Activated CD4-positive, alpha-beta T cell treated with anti-CD3 and anti-CD28 coated beads, Interleukin-2, amount 10 ng/mL, durations not matched to agents 24 days and 14 days (primary cell): ENCODE measurements at regions of chr2 and their contacts with region 1.

Region 1: DNA sequence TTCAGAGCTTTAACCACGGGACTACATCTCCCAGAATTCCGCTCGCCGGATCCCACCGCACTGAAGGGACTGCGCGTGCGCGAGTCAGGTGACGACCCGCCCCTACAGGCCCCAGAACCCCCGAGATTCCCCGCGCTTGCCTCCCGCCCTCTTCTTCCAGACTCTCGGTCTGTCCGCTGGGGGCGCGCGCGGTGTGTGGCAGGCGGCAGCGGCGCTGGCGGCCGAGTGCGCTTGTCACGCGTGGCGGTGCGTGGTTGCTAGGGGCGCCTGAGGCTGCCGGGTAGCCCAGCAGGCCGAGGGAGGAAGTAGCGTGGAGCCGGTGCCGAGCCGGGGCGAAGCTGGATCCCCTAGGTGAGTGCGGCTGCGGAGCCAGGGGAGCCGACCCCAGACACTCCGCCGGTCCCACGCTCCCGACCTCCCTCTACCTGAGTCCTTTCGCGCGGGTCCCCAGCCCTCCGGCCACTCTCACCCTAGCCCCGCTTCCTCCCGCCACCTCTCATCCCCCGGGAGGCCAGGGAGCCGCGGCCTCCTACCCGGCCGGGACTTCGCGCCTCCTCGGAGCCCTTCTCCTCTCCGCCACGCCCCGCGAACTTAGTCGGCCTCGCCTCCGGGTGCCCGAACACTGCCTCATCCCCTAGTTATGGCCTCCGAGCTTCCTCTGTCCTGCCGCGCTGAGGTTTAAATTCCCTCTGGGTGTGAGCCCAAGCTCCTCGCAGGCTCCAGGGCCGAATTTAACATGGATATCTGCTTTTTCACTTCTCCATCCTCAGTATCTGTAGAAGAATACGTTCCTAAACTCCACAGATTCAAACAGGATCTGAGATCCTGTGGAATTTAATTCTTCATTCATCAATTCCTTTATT is at the start of gene TTLL4:
- DNase-seq: peak; percentile 100
- H3K4me3 Mint-ChIP-seq: peak within 1 kb of the TSS; percentile 94
- H3K27ac Mint-ChIP-seq: peak within 1 kb of the TSS; percentile 85
- H3K4me1 Mint-ChIP-seq: peaks cover 18% of the 10 kb centered on the region
- H3K27me3 Mint-ChIP-seq: peaks cover 3% of the 10 kb centered on the region
- total RNA-seq, gene TTLL4: 66.1 and 71.2 TPM in 2 replicates

Region 2: GRCh38 chr2:218659258-218659987 is 51.5 kb before region 1 on chr2 and contains the starts of genes BCS1L and ZNF142:
- intact Hi-C with region 1: loop called (anchors 1 kb)
- DNase-seq: peak; percentile 98
- H3K4me3 Mint-ChIP-seq: peak within 1 kb of the TSS; percentile 98
- H3K27ac Mint-ChIP-seq: peak within 1 kb of the TSS; percentile 95
- H3K4me1 Mint-ChIP-seq: peaks cover 31% of the 10 kb centered on the region
- H3K27me3 Mint-ChIP-seq: no peaks in the 10 kb centered on the region
- total RNA-seq, gene BCS1L: 92.9 and 94.4 TPM in 2 replicates
- total RNA-seq, gene ZNF142: 59.6 and 60.9 TPM in 2 replicates

Region 3: DNA sequence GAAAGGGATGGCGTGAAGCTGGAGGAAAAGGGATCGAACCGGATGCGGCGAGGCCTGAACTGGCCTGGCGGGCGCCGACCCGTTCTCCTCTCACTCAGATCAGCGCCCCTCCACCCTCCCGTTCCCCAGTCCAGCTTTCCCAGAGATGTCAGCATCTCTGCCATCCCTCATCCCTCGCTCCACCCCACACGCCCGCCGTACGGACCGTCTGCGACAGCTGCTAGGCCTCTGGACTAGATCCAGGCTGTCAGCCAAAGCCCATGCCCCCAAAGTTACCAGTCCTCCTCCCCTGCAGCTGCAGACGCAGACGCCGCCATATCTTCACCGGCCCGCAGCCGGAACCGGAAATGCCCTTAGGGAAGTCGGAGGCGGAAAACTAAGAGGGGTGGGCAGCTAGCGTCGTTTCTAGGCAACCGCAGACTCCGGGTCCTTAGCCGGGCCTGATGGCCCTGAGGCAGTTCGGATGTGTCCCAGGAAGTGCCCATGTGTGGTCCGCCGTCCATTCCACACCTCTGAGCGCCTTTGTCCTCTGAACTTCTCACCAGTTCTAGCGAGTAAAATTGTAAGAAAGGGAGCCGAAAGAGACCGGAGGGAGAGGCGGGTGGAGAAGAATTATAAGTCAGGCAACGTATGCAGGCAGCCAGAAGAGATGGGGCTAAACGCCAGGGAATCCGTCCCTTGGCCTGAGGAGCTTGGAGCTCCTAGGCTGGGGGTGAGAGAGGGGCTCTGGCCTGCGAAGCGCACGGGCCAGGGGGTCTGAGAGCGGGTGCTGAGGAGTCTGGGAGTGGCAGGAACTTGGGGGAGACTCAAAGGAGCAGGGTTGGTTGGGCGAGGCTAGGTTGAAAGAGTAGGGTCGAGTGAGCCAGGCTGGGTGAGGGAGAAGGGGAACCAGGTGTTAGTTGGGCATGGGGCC is 39.0 kb before region 1 on chr2 and contains the starts of genes RNF25 and STK36:
- intact Hi-C with region 1: loop called (anchors 1 kb)
- DNase-seq: peak; percentile 95
- H3K4me3 Mint-ChIP-seq: peak within 1 kb of the TSS; percentile 97
- H3K27ac Mint-ChIP-seq: peak within 1 kb of the TSS; percentile 94
- H3K4me1 Mint-ChIP-seq: peaks cover 22% of the 10 kb centered on the region
- H3K27me3 Mint-ChIP-seq: no peaks in the 10 kb centered on the region
- total RNA-seq, gene RNF25: 23.6 and 28.8 TPM in 2 replicates
- total RNA-seq, gene STK36: 20.2 and 21.3 TPM in 2 replicates

Region 4: GRCh38 chr2:218852911-218853667 is 142.2 kb after region 1 on chr2:
- intact Hi-C with region 1: loop called (anchors 5 kb)
- DNase-seq: peak; percentile 86
- H3K4me3 Mint-ChIP-seq: no peak overlapping the region
- H3K27ac Mint-ChIP-seq: no peak overlapping the region
- H3K4me1 Mint-ChIP-seq: peaks cover 4% of the 10 kb centered on the region
- H3K27me3 Mint-ChIP-seq: peaks cover 60% of the 10 kb centered on the region

Region 5: GRCh38 chr2:218888341-218888740 is 177.4 kb after region 1 on chr2:
- intact Hi-C with region 1: no loop called
- DNase-seq: no peak
- H3K4me3 Mint-ChIP-seq: no peak overlapping the region
- H3K27ac Mint-ChIP-seq: no peak overlapping the region
- H3K4me1 Mint-ChIP-seq: peaks cover 21% of the 10 kb centered on the region
- H3K27me3 Mint-ChIP-seq: peaks cover 69% of the 10 kb centered on the region

Region 6: GRCh38 chr2:218908721-218909619 is 198.1 kb after region 1 on chr2:
- intact Hi-C with region 1: loop called (anchors 1 kb)
- DNase-seq: peak; percentile 96
- H3K4me3 Mint-ChIP-seq: peak overlapping the region; percentile 82
- H3K27ac Mint-ChIP-seq: peak overlapping the region; percentile 83
- H3K4me1 Mint-ChIP-seq: peaks cover 6% of the 10 kb centered on the region
- H3K27me3 Mint-ChIP-seq: peaks cover 34% of the 10 kb centered on the region